Activated T-helper 2 cell treated with anti-CD3 and anti-CD28 coated beads, Interferon-gamma antibody, Interleukin-2, Interleukin-4, amounts not matched to agents 10 μg/mL and 5 μg/mL and 100 μg/mL, durations not matched to agents 14 hours and 24 hours and 36 hours (primary cell): ENCODE measurements at regions of chr1 and their contacts with region 1.

Region 1: DNA sequence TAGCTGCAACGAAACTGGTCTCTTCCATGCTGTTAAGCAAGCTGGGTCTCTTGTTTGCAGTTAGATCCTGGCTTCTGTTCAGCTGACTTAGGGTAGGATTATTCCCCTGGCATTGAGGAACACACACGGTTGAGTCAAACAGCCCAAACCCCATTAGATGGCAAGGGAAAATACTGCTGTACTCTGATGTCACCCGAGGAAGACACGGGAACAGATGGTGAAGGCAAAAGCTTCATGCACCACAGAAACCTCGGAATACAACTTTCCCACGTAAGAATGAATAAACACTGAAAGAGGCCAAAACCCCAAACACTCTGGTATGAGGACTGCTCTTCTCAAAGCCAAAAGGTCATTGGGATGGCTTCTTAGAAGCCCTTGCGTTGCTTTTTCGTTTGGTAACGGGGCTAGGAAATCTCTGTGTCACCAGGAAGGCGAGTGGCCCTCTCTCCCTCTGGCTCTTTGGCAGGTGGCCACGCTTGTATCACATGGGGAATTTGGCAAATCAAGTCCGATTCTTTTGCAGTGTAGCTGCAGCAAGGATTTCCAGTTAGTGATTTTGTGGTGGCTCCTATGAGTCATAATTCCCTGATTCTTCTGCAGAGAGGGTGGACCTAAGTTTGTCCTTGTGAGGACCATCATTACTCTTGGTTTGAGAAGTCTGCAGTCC is 16.7 kb upstream of the LYST start:
- DNase-seq: no peak
- H3K4me3 Mint-ChIP-seq: peak overlapping the region; percentile 63
- H3K27ac Mint-ChIP-seq: peak overlapping the region; percentile 67
- H3K4me1 Mint-ChIP-seq: peaks cover 46% of the 10 kb centered on the region
- H3K27me3 Mint-ChIP-seq: no peaks in the 10 kb centered on the region

Region 2: DNA sequence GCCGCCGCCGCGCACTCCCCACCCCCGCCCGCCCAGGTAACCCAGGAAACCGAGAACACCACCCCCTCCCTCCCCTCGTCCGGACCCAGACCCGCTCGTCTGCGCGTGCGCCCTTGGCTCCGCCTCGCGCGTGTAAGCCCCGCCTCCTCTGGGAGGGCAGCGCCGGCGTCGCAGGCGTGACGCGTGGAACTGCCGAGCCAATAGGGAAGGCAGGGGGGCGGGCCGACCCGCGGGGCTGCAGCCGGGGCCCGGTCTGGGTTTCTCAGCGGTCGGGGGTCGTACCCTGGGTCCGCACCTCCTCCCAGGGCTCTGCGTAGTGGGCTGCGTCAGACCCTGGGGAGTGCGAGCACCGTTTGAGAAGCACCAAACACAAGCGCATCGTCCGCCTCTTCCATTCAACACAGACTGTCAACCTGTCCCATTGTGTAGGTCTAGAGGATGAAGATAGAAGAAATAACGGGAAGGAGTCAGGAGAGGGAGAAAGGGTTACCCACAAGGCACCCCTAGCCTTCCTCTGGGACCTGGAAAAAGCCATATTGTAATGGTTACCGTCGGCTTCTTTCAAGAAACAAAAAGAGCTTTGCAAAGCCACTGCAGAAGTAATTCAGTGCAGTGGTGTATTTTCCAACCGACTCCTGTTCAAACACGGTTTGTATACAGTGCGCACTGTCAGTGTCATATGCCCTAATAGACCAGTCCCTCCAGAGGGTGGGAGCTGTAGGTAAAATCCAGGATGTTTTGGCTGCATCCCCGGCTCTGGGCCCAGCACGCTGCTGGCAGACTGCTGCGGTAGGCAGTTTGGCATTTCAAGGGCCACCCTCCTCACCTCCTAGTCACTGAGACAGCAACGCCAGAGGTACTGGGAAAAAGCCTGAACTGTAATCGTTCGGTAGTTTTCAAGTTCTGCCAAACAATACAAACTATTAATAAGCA is 16.2 kb before region 1 on chr1:
- intact Hi-C with region 1: loop called (anchors 1 kb)
- DNase-seq: peak; percentile 97
- H3K4me3 Mint-ChIP-seq: peak overlapping the region; percentile 98
- H3K27ac Mint-ChIP-seq: peak overlapping the region; percentile 99
- H3K4me1 Mint-ChIP-seq: peaks cover 52% of the 10 kb centered on the region
- H3K27me3 Mint-ChIP-seq: no peaks in the 10 kb centered on the region

Region 3: DNA sequence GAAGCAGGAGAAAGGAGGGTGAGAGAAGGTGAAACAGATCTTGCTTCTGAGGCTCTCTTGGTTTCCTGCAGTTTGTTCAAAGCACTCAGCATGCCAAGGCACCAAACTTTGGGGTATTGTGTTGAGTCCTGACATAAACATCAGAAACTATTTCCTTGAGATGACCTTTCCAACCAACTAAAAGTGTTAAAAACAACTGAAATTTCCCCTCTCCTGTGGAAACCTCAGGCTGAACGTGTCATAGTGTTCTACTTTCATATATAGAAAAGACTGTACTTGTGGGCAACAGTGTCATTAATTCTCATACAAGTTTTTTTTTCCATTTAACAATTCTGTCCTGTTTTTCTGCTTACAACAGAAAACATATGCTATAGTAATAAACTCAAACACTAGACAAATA is 10.3 kb before region 1 on chr1:
- intact Hi-C with region 1: loop called (anchors 1 kb)
- DNase-seq: no peak
- H3K4me3 Mint-ChIP-seq: peak overlapping the region; percentile 70
- H3K27ac Mint-ChIP-seq: peak overlapping the region; percentile 98
- H3K4me1 Mint-ChIP-seq: peaks cover 61% of the 10 kb centered on the region
- H3K27me3 Mint-ChIP-seq: no peaks in the 10 kb centered on the region

Region 4: GRCh38 chr1:235910357-235911299 is 27.2 kb after region 1 on chr1:
- intact Hi-C with region 1: loop called (anchors 1 kb)
- DNase-seq: no peak
- H3K4me3 Mint-ChIP-seq: no peak overlapping the region
- H3K27ac Mint-ChIP-seq: peak overlapping the region; percentile 86
- H3K4me1 Mint-ChIP-seq: peaks cover 38% of the 10 kb centered on the region
- H3K27me3 Mint-ChIP-seq: peaks cover 8% of the 10 kb centered on the region

Region 5: DNA sequence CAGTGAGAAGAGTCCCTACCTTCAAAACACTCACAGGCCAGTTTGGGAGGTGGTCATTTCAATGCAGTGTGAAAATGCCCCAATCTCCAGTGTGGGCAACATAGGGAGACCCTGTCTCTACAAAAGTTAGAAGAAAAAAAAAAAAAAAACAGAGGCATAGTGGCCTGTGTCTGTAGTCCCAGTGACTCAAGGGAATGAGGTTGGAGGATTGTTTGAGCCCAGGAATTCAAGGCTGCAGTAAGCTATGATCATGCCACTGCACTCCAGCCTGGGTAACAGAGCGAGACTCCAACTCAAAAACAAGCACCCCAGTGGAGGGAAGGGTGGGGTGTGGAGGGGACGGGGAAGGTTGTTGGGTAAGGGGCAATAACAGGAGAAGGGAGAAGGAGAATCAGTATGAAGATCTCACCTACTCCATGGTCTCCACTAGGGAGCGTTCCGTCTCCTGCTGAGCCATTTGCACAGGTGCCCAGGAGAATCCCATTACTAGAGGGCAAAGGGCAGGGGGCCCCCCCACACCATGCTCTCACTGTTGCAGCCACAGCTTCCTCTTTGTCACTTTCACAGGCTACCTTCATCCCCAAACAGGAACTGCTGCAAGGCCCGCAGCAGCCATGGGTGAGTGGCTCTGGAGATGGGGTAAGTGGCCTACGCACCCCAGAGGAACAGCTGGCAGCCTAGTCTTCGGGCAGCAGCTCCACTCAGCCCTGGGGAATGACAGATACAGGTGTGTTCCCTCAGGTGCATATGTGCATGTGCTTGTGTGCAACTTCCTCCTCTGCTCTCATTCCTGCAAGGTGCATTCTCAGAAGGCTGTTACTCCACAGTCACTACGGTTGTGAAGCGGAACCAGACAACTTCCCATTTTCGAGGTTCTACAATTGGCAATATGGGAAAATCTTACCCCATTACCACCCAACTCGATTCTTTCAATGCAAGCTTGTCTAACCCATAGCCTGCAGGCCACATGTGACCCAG is 71.2 kb after region 1 on chr1:
- intact Hi-C with region 1: loop called (anchors 1 kb)
- DNase-seq: peak; percentile 15
- H3K4me3 Mint-ChIP-seq: no peak overlapping the region
- H3K27ac Mint-ChIP-seq: no peak overlapping the region
- H3K4me1 Mint-ChIP-seq: peaks cover 33% of the 10 kb centered on the region
- H3K27me3 Mint-ChIP-seq: no peaks in the 10 kb centered on the region

Region 6: DNA sequence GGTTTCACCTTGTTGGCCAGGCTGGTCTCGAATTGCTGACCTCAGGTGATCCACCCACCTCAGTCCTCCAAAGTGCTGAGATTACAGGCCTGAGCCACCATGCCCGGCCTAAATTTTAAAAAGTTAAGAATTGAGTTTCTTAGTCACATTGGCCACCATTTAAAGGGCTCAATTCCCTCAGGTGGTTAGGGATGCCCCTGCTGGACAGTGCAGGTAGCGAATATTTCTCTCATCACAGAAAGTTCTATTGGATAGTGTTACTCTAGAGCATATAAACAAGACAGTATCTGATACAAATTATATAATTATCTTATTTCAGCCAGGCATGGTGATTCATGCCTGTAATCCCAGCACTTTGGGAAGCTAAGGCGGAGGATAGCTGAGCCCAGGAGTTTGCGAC is 1687.1 kb after region 1 on chr1:
- intact Hi-C with region 1: no loop called
- DNase-seq: no peak
- H3K4me3 Mint-ChIP-seq: no peak overlapping the region
- H3K27ac Mint-ChIP-seq: no peak overlapping the region
- H3K4me1 Mint-ChIP-seq: no peaks in the 10 kb centered on the region
- H3K27me3 Mint-ChIP-seq: no peaks in the 10 kb centered on the region